PC-9 (cell line): ENCODE measurements at regions of chr17 and their contacts with region 1.

Region 1: GRCh38 chr17:58417300-58418092 is at the start of gene RNF43:
- DNase-seq: peak; percentile 92 to 95
- H3K4me3 ChIP-seq: peak within 1 kb of the TSS; percentile 30; the same call in 1 of the 2 replicates
- H3K27ac ChIP-seq: peak within 1 kb of the TSS; percentile 27; the same call in 1 of the 2 replicates
- H3K4me1 ChIP-seq: peaks cover 28% of the 10 kb centered on the region
- H3K27me3 ChIP-seq: peaks cover 28% of the 10 kb centered on the region
- CTCF ChIP-seq: peak; percentile 95
- total RNA-seq, gene RNF43: 0.33 TPM in 1 of 2 replicates, not detected in the other

Region 2: DNA sequence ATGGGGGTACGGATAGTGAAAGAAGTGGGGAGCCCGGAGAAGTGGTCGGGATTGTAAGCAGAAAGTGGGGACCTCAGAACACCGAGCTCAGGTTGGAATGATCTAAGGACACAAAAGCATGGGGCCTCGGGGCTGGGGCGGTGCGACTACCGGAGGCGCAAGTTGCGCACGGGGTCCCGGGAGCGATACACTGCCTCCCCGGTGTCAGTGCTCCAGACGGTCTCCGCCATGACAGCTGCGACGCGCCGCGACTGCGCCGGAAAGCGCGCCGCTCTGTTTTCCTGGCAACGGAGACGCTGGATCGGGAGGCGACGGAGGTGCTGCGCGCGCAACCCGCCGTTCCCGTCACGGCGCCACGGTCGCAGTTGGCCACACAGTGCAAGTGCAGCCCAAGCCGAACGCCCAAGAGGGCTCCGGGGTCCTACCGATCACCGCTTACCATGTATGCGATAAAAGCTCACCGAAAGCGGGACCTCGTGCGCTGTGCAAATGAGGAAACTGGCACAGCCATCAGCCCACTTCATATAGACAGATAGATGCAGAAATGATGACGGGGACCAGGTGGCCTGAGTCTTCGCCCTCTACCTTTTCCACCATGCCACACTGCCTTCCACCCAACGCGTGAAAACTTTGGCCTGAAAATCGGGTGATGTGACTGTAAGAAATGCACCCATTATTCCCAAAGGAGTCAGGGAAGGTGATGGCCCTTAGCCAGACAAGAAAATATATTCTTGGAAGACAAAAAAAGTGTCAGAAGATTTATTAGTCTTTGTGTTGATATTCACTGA is 198.3 kb before region 1 on chr17 and contains the start of gene MKS1:
- CTCF ChIA-PET with region 1: no interaction called
- POLR2A ChIA-PET with region 1: no interaction called
- intact Hi-C with region 1: loop called (anchors 10 kb)
- DNase-seq: peak; percentile 77 to 94
- H3K4me3 ChIP-seq: peak within 1 kb of the TSS; percentile 67
- H3K27ac ChIP-seq: no peak within 1 kb of the TSS
- H3K4me1 ChIP-seq: peaks cover 16% of the 10 kb centered on the region
- H3K27me3 ChIP-seq: no peaks in the 10 kb centered on the region
- CTCF ChIP-seq: peak; percentile 71
- total RNA-seq, gene MKS1: 28.6 and 30.1 TPM in 2 replicates

Region 3: DNA sequence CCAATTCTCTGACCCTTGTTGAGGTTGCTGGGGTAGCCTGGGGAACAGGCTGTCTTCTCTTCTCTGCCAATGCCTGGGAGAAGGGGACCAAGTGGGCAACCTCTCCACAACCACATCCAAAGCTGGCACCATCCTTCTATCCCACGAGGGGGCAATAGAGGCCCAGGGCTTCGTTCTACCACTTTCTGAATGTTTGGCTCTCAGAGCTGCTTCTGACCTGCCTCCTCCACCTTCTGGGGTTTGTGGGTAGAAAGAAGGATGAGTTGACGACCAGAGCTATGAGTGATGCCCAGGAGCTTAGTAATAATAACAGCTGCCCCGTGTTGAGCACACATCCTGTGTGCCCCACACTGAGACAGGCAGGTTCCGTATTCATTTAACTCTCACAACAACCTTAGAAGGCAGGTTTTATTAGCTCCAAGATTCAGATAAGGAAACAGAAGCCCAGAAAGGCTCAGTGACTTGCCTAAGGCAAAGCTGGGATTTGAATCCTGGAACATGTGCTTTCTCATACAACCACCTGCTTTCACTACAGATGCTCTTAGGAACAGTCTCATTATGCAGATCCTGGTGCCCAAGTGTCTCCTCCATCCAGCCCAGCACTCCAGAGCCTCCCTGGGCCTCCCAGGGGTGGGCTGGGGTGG is 100.0 kb before region 1 on chr17:
- CTCF ChIA-PET with region 1: interaction called, 28 read pairs
- POLR2A ChIA-PET with region 1: no interaction called
- intact Hi-C with region 1: loop called (anchors 1 kb)
- DNase-seq: peak; percentile 58 to 71
- H3K4me3 ChIP-seq: no peak overlapping the region
- H3K27ac ChIP-seq: no peak overlapping the region
- H3K4me1 ChIP-seq: no peaks in the 10 kb centered on the region
- H3K27me3 ChIP-seq: peaks cover 60% of the 10 kb centered on the region; the same call in 1 of the 2 replicates
- CTCF ChIP-seq: peak; percentile 88

Region 4: DNA sequence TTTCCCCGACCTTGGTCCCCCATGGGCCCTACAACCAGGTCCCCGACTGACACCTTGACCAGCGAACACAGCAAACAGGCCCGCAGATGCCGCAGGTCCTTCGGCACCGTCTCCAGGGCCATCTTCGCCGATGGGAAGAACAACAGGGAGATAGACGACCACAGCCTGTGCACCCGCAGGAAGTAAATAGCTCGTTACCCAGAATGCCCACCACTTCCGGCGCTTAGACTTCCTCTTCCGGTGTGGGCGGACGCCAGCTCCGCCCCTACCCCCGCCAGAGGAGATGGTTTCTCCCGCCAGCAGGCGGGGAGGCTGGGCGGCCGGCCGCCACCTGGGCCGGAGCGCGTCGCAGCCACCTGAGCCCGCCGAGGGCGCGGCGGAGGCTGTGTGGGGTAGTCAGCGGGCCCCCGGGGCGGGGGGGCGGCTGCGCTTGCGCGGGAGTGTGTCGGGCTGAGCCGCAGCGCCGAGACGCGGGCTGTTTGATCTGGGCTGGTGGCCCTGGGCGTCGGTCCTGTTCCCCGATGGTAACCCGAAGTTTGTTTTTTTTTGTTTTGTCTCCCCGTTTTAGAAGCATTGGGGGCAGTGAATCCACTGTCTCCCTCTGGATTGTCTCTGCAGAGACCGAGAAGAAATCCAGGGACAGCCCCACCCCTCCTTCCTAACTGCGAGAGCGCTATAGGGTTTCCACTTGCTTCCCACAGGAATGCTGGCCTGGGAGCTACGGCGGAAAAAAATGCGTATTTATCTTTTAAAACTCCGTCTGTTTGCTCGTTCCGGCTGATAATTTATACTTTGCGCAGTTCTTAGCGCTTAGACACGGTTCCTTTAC is 65.3 kb before region 1 on chr17 and contains the start of gene SUPT4H1:
- CTCF ChIA-PET with region 1: interaction called, 20 read pairs
- POLR2A ChIA-PET with region 1: interaction called, 28 read pairs
- intact Hi-C with region 1: loop called (anchors 1 kb)
- DNase-seq: peak; percentile 83 to 92
- H3K4me3 ChIP-seq: peak within 1 kb of the TSS; percentile 99
- H3K27ac ChIP-seq: peak within 1 kb of the TSS; percentile 64
- H3K4me1 ChIP-seq: peaks cover 16% of the 10 kb centered on the region
- H3K27me3 ChIP-seq: 0 out of 2 replicates have a peak, but pooled peaks cover 4% of the 10 kb centered on the region
- CTCF ChIP-seq: no peak
- total RNA-seq, gene SUPT4H1: 72.2 and 74.8 TPM in 2 replicates

Region 5: DNA sequence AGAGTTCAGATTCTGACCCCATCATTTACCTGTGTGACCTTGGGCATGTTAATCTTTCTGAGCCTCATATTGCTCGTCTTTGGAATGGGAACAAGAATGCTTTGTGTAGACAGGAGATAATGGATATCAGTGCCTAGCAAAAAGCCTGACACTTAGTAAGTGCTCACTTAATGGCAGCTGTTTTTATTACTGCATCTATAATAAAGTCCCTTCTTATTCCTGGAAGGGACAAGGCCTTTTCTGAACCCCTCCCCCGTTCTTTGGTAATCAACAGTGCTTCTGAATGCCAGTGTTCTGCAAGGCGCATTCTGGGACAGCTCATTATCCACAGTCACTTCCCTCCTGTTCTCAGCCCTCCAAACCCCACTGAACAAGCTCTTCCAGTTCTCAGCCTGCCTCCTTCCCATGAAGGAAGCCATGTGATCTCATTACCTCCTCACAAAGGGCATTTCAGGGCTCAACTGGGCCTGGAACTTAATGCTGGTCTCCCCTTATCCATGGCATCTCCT is 40.3 kb before region 1 on chr17:
- CTCF ChIA-PET with region 1: no interaction called
- POLR2A ChIA-PET with region 1: interaction called, 12 read pairs
- intact Hi-C with region 1: loop called (anchors 1 kb)
- DNase-seq: peak; percentile 57 to 92
- H3K4me3 ChIP-seq: no peak overlapping the region
- H3K27ac ChIP-seq: no peak overlapping the region
- H3K4me1 ChIP-seq: peaks cover 23% of the 10 kb centered on the region
- H3K27me3 ChIP-seq: peaks cover 14% of the 10 kb centered on the region; the same call in 1 of the 2 replicates
- CTCF ChIP-seq: no peak

Region 6: DNA sequence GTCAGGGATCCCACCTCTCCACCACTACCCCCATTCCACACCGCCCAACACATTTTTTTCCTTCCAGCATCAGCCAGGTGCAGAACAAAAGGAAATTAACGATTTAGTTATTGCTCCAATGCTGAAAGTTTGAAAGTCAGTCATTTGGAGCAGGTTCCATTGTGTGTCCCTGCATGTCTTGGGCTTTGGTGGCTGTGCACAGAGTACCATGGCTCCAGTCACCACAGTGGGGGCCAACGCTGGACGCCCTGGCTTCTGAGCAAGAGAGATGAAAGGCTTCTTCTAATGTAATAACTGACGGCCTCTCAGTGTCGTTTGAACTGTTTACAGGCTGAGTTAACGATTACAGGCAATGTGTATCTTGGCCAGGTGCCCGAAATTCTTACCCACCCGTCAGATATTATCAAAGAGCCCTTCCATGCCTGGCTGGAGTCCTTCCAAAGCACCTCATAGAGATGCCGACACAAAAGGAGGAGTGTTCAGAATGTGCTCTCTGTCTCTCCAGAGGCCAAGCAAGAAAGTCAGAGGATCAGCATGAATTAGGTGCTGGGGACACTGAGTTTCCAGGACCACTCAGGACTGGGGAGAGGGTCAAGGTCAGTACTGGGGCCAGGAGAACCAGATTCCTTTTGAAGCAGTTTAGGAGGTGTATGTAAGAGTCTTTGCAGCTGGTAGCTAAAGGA is 26.1 kb before region 1 on chr17:
- CTCF ChIA-PET with region 1: interaction called, 3 read pairs
- POLR2A ChIA-PET with region 1: no interaction called
- intact Hi-C with region 1: loop called (anchors 2 kb)
- DNase-seq: peak; percentile 86 to 94
- H3K4me3 ChIP-seq: no peak overlapping the region
- H3K27ac ChIP-seq: no peak overlapping the region
- H3K4me1 ChIP-seq: peaks cover 60% of the 10 kb centered on the region
- H3K27me3 ChIP-seq: peaks cover 33% of the 10 kb centered on the region; the same call in 1 of the 2 replicates
- CTCF ChIP-seq: no peak